ENCODE measurements at regions of chr10 and their contacts with region 1.

Region 1: DNA sequence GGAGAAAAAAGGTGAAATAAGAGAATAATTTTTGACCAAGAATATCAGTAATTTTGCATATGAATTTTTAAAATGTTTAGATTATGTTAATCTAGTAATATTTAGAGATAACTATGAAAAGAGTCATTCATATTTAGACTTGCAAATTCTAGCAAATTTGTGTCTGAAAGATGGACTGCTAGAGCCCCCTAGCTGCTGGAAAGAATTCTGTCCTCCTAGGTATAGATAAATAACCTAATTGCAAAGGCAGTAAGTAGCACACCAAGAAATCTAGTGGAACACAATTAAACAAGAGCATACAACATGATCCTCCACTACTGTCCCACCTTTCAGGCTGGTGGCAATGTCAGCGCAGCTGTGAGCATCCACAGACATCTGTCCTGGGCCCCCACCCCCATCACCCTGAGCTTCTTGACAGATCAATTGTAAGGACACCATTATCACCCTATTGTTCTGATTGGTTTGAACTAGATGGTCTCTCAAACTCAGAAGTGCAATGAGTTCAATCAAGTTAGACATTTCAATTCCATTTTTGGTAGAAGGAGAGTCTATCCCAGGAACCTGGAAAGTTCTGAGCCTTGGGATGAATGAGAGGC is 15.0 kb upstream of the GFRA1 start:
- DNase-seq: no peak
- H3K4me3 ChIP-seq: no peak overlapping the region
- H3K27ac ChIP-seq: no peak overlapping the region
- H3K4me1 ChIP-seq: no peaks in the 10 kb centered on the region
- H3K27me3 ChIP-seq: no peaks in the 10 kb centered on the region
- CTCF ChIP-seq: peak; percentile 61

Region 2: GRCh38 chr10:115355162-115355760 is 932.7 kb before region 1 on chr10:
- CTCF ChIA-PET with region 1: no interaction called
- POLR2A ChIA-PET with region 1: no interaction called
- intact Hi-C with region 1: loop called (anchors 2 kb)
- DNase-seq: peak in 1 of 2 experiments; percentile 20
- H3K4me3 ChIP-seq: no peak overlapping the region
- H3K27ac ChIP-seq: no peak overlapping the region
- H3K4me1 ChIP-seq: no peaks in the 10 kb centered on the region
- H3K27me3 ChIP-seq: no peaks in the 10 kb centered on the region
- CTCF ChIP-seq: peak; percentile 73

Region 3: GRCh38 chr10:115706026-115706781 is 581.8 kb before region 1 on chr10:
- CTCF ChIA-PET with region 1: no interaction called
- POLR2A ChIA-PET with region 1: no interaction called
- intact Hi-C with region 1: loop called (anchors 2 kb)
- DNase-seq: no peak
- H3K4me3 ChIP-seq: no peak overlapping the region
- H3K27ac ChIP-seq: no peak overlapping the region
- H3K4me1 ChIP-seq: no peaks in the 10 kb centered on the region
- H3K27me3 ChIP-seq: no peaks in the 10 kb centered on the region
- CTCF ChIP-seq: peak; percentile 58

Region 4: DNA sequence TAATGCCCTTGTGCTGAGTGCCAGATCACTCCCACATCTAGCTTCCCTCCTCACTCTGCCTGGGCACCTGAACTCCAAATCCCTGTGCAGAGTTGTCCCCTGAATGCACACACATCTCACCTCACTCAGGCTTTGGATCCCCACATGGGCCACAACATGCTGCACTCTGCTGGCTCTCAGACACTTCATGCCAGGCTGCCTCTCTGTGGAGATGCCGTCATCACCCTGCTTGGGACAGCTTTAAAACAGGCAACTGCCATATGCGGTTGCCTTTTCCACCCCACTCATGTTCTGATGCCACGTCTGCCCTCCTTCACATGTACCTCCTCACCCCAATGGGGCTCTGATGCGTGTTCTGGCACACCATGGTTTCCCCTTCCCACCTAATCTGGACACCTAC is 492.0 kb before region 1 on chr10:
- CTCF ChIA-PET with region 1: no interaction called
- POLR2A ChIA-PET with region 1: no interaction called
- intact Hi-C with region 1: loop called (anchors 5 kb)
- DNase-seq: no peak
- H3K4me3 ChIP-seq: no peak overlapping the region
- H3K27ac ChIP-seq: no peak overlapping the region
- H3K4me1 ChIP-seq: no peaks in the 10 kb centered on the region
- H3K27me3 ChIP-seq: no peaks in the 10 kb centered on the region
- CTCF ChIP-seq: no peak

Measured in PC-9 (cell line).